Panc1 (cell line): ENCODE measurements at regions of chr11 and their contacts with region 1.

Region 1: DNA sequence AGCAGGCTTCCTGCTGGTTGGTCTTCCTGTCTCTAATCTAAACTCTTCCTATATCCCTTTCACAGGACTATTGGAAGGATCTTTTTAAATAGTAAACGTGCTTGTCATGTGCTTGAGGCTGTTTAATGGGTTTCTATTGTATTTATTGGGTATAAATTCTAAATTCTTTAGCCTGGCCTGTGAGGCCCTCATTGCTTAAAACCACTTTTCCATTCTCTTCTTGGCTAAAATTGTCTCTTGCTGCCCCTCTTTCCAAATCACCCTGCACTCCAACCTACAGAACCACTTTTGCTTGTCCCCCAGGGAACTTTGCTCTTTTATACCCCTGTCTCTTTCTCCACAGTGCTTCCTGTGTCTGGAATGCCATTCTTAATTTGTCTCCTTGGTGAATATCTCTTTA is 46.4 kb upstream of the MUC15 start:
- DNase-seq: no peak
- ATAC-seq: no peak
- H3K4me3 ChIP-seq: no peak overlapping the region
- H3K27ac ChIP-seq: no peak overlapping the region
- H3K4me1 ChIP-seq: no peaks in the 10 kb centered on the region
- H3K27me3 ChIP-seq: no peaks in the 10 kb centered on the region
- CTCF ChIP-seq: no peak

Region 2: DNA sequence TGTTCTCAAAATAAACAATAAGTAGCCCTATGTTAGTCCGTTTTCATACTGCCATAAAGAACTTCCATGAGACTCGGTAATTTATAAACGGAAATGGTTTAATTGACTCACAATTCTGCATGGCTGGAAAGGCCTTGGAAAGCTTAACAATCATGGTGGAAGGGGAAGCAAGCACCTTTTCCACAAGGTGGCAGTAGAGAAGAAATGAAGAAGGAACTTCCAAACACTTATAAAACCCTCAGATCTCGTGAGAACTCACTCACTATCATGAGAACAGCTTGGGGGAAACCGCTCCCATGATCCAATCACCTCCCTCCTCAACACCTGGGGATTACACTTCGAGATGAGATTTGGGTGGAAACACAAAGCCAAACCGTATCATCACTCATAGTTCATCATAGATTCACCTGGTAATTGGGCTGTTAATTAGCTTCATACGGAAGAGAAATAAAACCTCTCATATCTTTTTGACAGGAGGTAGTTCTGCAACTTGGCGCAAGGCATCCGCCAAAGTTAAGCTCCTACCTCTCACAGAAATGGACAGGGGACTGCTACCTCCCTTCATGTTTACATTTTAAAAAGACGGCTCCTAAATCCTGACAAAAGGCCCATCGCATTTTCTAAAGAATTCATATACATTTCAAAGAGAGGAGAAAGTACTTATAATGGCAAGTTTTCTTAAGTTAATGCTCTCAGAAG is 95.4 kb before region 1 on chr11:
- CTCF ChIA-PET with region 1: no interaction called
- POLR2A ChIA-PET with region 1: no interaction called
- in situ Hi-C with region 1: no loop called
- intact Hi-C with region 1: no loop called
- DNase-seq: peak; percentile 0
- ATAC-seq: no peak
- H3K4me3 ChIP-seq: no peak overlapping the region
- H3K27ac ChIP-seq: no peak overlapping the region
- H3K4me1 ChIP-seq: no peaks in the 10 kb centered on the region
- H3K27me3 ChIP-seq: no peaks in the 10 kb centered on the region
- CTCF ChIP-seq: peak; percentile 29; the same call in 1 of the 2 replicates

Region 3: GRCh38 chr11:27381238-27381666 is 762.8 kb after region 1 on chr11:
- CTCF ChIA-PET with region 1: no interaction called
- POLR2A ChIA-PET with region 1: interaction called, 11 read pairs
- in situ Hi-C with region 1: no loop called
- intact Hi-C with region 1: no loop called
- DNase-seq: no peak
- ATAC-seq: no peak
- H3K4me3 ChIP-seq: no peak overlapping the region
- H3K27ac ChIP-seq: no peak overlapping the region
- H3K4me1 ChIP-seq: peaks cover 17% of the 10 kb centered on the region
- H3K27me3 ChIP-seq: no peaks in the 10 kb centered on the region
- CTCF ChIP-seq: no peak